ENCODE measurements at regions of chr1 and their contacts with region 1.

Region 1: GRCh38 chr1:114670083-114671010 is 498 bp upstream of the DENND2C start:
- DNase-seq: peak; percentile 95
- H3K4me3 Mint-ChIP-seq: peak overlapping the region; percentile 84
- H3K27ac Mint-ChIP-seq: peak overlapping the region; percentile 96
- H3K4me1 Mint-ChIP-seq: peaks cover 24% of the 10 kb centered on the region
- H3K27me3 Mint-ChIP-seq: peaks cover 3% of the 10 kb centered on the region
- CTCF ChIP-seq: no peak

Region 2: DNA sequence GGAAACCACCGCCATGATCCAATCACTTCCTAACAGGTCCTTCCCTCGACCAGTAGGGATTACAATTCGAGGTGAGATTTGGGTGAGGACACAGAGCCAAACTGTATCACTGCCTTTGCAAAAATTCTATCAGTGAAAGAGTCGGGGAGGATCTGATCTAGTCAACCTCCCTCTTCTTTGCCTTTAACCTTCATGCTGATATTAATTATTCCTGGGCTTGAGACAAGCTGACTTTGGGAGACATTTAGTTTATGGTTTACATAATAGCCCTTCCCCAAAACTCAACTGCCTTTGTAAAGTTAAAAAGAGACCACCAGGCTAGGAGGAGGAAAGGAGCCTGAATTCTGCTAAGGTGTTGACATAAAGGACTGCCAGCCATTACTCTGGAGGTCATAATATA is 252.1 kb before region 1 on chr1:
- CTCF ChIA-PET with region 1: no interaction called
- POLR2A ChIA-PET with region 1: no interaction called
- intact Hi-C with region 1: loop called (anchors 5 kb)
- DNase-seq: no peak
- H3K4me3 Mint-ChIP-seq: no peak overlapping the region
- H3K27ac Mint-ChIP-seq: no peak overlapping the region
- H3K4me1 Mint-ChIP-seq: peaks cover 5% of the 10 kb centered on the region
- H3K27me3 Mint-ChIP-seq: no peaks in the 10 kb centered on the region
- CTCF ChIP-seq: no peak

Region 3: DNA sequence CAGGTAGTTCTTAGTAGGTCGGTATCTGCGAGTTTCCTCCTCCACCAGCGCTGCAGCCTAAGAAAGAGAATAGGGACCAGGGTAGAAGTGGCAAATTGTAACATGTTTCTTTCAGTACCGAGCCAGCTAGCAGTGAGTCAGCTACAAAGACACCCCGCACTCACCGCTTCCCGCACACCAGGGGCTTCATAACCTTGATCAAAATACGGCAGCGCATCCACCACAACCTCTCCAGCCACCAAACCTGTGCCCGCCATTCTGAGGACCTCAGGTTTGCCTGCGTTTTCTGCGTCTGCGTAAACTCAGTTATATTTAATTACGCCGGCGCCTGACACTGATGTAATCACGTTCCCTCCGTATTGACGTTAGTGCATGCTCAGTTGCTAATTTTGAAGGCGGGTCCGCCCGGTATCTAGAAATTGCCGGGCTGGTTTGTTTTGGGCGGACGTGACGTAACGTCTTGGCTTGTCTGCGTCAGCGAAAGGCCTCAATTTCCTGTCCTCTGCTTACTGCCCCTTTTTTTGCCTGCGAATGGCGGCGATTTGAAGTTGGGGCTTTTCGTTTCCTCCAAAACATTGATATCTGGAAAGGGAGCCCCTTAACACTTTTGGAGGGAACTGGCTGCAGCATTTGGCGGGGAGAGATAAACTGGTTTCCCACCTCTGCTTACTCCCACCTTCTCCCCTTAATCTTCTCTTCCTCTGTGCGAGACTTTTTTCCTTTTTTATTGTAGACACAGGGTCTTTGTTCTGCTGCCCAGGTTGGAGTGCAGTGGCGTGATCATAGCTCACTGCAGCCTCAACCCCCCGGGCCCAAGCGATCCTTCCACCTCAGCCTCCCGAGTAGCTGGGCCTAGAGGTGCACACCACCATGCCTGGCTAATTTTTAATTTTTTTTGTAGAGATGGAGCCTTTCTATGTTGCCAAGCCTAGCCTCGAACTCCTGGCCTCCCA is 88.7 kb before region 1 on chr1 and contains the start of gene BCAS2:
- CTCF ChIA-PET with region 1: interaction called, 16 read pairs
- POLR2A ChIA-PET with region 1: interaction called, 99 read pairs
- intact Hi-C with region 1: loop called (anchors 1 kb)
- DNase-seq: peak; percentile 98
- H3K4me3 Mint-ChIP-seq: peak within 1 kb of the TSS; percentile 98
- H3K27ac Mint-ChIP-seq: peak within 1 kb of the TSS; percentile 99
- H3K4me1 Mint-ChIP-seq: peaks cover 6% of the 10 kb centered on the region
- H3K27me3 Mint-ChIP-seq: no peaks in the 10 kb centered on the region
- CTCF ChIP-seq: no peak
- total RNA-seq, gene BCAS2: 85.4 and 97.2 TPM in 2 replicates

Region 4: GRCh38 chr1:114610546-114611245 is 59.7 kb before region 1 on chr1:
- CTCF ChIA-PET with region 1: interaction called, 14 read pairs
- POLR2A ChIA-PET with region 1: interaction called, 230 read pairs
- intact Hi-C with region 1: loop called (anchors 1 kb)
- DNase-seq: peak; percentile 94
- H3K4me3 Mint-ChIP-seq: peak overlapping the region; percentile 72
- H3K27ac Mint-ChIP-seq: peak overlapping the region; percentile 100
- H3K4me1 Mint-ChIP-seq: peaks cover 12% of the 10 kb centered on the region
- H3K27me3 Mint-ChIP-seq: no peaks in the 10 kb centered on the region
- CTCF ChIP-seq: no peak

Region 5: DNA sequence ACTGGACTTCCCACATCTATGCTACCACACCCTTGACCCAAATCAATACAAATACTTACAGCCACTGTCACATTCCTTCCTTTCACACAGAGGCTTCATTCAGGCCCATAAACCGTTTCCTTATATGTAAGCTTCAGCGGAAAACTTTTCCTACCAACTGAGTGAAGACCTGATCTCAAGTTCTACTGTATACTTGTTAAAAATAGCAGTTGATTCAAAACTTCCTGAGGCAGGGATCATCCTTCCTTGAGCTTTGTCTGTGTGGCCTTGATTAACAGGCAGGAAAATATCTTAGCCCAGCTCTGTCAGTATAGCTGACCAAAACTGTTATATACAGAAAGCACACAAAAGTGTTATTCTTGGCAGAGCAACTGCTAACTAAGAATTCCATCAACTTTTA is 43.2 kb before region 1 on chr1:
- CTCF ChIA-PET with region 1: interaction called, 4 read pairs
- POLR2A ChIA-PET with region 1: interaction called, 54 read pairs
- intact Hi-C with region 1: no loop called
- DNase-seq: no peak
- H3K4me3 Mint-ChIP-seq: no peak overlapping the region
- H3K27ac Mint-ChIP-seq: no peak overlapping the region
- H3K4me1 Mint-ChIP-seq: peaks cover 5% of the 10 kb centered on the region
- H3K27me3 Mint-ChIP-seq: no peaks in the 10 kb centered on the region
- CTCF ChIP-seq: no peak

Region 6: DNA sequence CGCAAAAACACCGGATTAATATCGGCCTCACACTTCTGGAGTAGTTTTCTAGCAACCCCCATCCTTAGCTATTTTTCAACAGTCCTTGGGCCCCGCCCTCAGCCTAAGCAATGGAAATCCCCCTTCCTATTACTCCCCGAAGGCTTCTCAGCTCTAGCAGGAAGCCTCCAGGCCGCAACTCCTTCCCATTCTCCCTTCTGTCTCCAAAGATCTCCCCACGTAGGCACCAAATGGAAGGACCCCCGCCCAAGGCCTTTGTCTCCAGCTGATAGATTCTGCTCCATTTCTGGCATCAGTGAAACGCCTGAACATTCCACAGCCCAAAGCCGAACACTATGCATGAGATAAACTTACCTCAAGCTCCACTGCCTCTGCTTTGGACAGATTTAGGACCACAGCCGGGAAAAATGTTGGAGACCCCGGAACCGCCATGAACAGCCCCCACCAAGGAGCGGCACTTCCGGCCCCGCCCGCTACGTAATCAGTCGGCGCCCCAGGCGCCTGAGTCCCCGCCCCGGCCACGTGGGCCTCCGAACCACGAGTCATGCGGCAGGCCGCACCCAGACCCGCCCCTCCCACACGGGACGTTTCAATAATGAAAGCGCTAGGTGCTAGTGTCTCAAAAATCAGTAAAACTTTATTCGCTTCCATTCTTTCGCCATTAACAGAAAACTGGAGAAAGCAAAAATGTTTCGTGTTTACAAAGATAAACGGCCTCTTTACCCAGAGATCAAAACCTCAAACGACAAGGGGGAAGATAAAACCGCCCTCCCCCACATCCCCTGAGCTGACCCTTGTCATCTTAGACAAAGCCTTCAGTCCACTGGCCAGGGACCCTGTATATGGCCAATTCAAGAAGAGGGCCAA is 46.2 kb after region 1 on chr1 and contains the start of gene NRAS:
- CTCF ChIA-PET with region 1: interaction called, 5 read pairs
- POLR2A ChIA-PET with region 1: interaction called, 37 read pairs
- intact Hi-C with region 1: no loop called
- DNase-seq: peak; percentile 89
- H3K4me3 Mint-ChIP-seq: peak within 1 kb of the TSS; percentile 99
- H3K27ac Mint-ChIP-seq: peak within 1 kb of the TSS; percentile 100
- H3K4me1 Mint-ChIP-seq: peaks cover 8% of the 10 kb centered on the region
- H3K27me3 Mint-ChIP-seq: no peaks in the 10 kb centered on the region
- CTCF ChIP-seq: no peak
- total RNA-seq, gene NRAS: 38.9 and 41.4 TPM in 2 replicates

Region 7: DNA sequence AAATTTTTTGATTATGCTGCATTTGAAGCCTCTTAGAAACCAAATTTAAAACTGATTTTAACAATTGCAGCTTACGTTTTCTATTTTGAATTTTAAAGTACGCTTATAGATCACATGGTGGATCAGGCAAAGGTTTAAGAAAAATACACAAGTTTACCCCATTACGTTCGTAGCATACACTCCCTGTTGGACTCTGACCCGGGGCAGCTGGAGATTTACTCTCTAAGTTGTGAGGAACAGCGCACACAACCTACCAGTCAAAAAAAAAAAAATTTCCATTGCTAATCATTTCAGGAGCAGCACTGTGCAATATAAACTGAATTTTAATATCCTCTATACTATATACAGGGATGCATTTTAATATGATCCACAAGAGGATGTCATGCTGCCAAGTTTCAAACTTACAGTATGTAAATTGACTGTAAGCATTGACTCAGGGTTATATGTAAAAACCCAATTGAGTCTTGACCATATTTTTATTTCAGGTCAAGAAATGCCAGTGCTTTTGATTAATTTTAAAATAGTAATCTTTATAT is 67.0 kb after region 1 on chr1:
- CTCF ChIA-PET with region 1: no interaction called
- POLR2A ChIA-PET with region 1: no interaction called
- intact Hi-C with region 1: no loop called
- DNase-seq: no peak
- H3K4me3 Mint-ChIP-seq: no peak overlapping the region
- H3K27ac Mint-ChIP-seq: no peak overlapping the region
- H3K4me1 Mint-ChIP-seq: peaks cover 17% of the 10 kb centered on the region
- H3K27me3 Mint-ChIP-seq: no peaks in the 10 kb centered on the region
- CTCF ChIP-seq: no peak

Region 8: GRCh38 chr1:114853554-114853953 is 183.2 kb after region 1 on chr1:
- CTCF ChIA-PET with region 1: no interaction called
- POLR2A ChIA-PET with region 1: no interaction called
- intact Hi-C with region 1: no loop called
- DNase-seq: no peak
- H3K4me3 Mint-ChIP-seq: no peak overlapping the region
- H3K27ac Mint-ChIP-seq: no peak overlapping the region
- H3K4me1 Mint-ChIP-seq: no peaks in the 10 kb centered on the region
- H3K27me3 Mint-ChIP-seq: peaks cover 34% of the 10 kb centered on the region
- CTCF ChIP-seq: no peak